Endothelial cell of umbilical vein (primary cell): ENCODE measurements at regions of chr3 and their contacts with region 1.

Region 1: DNA sequence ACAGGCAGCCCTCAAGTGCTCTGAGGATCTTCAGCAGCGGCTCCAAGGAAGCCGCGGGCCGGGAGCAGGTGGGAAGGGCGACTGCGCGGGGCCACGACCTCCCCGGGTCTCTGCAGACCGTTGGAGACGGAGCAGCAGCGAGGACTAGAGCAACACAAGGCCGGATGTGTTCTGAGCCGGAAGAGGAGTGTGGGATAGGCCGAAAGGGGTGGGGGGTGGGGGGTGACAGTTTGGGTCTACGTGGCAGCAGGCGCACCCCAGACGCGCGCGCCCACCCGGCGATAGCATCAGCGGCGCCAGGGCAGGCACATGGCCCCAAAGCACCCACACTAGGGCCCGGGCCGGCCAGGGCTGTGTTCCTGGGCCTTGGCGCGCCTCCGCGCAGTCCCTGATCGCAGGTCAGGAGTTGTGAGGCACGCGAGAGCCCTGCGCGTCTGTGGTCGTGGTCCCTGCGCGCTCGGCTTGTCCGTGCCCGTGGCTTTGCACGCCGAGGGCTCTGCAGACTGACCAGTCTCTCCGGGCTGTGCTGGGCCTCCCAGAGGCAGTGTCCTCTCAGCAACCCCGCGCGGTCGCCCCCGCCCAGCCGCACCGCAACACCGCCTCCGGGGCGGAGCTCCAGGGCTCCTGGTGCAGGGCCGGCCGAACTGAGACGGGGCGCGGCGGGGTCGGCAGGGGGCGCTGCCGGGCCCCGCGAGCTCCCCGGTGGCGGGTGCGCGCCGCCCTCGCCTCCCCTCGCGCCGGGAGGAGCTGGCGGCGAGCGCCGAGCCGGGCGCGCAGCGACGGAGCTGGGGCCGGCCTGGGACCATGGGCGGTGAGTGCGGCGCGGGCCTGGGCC is at the start of gene PXYLP1:
- DNase-seq: peak; percentile 83
- H3K4me3 ChIP-seq: peak within 1 kb of the TSS; percentile 65 to 75 (median 72)
- H3K27ac ChIP-seq: no peak within 1 kb of the TSS
- H3K4me1 ChIP-seq: peaks cover 8% of the 10 kb centered on the region
- H3K27me3 ChIP-seq: peaks cover 11 to 31% of the 10 kb centered on the region in 2 experiments
- CTCF ChIP-seq: peak; percentile 63 to 77
- POLR2A ChIP-seq: peak; percentile 61
- total RNA-seq, gene PXYLP1: 0.88 and 1.7 TPM in 2 replicates

Region 2: DNA sequence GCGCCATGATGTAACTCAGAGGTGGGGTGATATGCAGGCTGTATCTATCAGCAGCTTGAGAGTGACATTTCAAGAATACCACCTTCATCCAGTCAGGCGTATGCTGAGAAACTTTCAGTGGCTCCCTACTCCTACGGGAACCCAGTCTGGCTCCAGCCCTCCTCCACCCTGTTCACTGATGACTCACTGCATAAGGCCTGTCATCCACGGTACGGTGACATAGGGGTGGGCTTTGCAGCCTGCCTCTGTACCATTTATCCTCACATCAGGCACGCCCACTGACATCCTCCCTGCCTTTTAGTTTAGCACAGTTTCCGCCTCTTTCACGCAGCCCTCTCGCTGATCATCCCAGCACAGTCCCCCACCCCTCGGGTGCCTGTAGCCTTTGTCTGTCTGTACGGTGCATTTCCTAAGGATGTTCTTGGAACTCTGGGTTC is 12.0 kb after region 1 on chr3:
- CTCF ChIA-PET with region 1: interaction called, 13 read pairs
- POLR2A ChIA-PET with region 1: no interaction called
- dilution Hi-C with region 1: no loop called
- intact Hi-C with region 1: no loop called
- DNase-seq: no peak
- H3K4me3 ChIP-seq: no peak overlapping the region
- H3K27ac ChIP-seq: no peak overlapping the region
- H3K4me1 ChIP-seq: no peaks in the 10 kb centered on the region
- H3K27me3 ChIP-seq: no peaks in the 10 kb centered on the region
- CTCF ChIP-seq: no peak
- POLR2A ChIP-seq: no peak

Region 3: DNA sequence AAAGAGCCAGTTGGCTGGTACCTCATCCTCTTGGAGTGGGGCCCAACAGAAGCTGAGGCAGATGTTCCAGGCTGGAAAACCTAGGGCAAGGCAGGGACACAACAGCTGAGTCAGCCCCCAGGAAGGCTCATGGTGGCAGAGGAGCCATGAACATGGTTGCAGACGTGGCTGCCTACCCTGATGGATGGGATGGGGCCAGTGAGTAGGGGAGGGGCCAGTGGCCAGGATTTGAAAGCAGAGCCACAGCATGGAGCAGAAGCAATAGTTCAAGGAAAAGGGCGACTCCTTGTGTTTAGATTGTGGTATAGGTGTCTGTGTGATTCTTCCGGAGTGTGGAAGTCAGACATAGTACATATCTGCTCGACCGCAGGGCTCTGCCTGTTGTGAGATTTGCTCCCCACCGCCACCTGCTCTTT is 24.5 kb after region 1 on chr3:
- CTCF ChIA-PET with region 1: interaction called, 15 read pairs
- POLR2A ChIA-PET with region 1: no interaction called
- dilution Hi-C with region 1: no loop called
- intact Hi-C with region 1: loop called (anchors 1 kb)
- DNase-seq: peak; percentile 6
- H3K4me3 ChIP-seq: no peak overlapping the region
- H3K27ac ChIP-seq: no peak overlapping the region
- H3K4me1 ChIP-seq: no peaks in the 10 kb centered on the region
- H3K27me3 ChIP-seq: peaks cover 0 to 2% of the 10 kb centered on the region in 2 experiments
- CTCF ChIP-seq: peak; percentile 4 to 25
- POLR2A ChIP-seq: no peak

Region 4: GRCh38 chr3:141279077-141279967 is 48.0 kb after region 1 on chr3:
- CTCF ChIA-PET with region 1: interaction called, 6 read pairs
- POLR2A ChIA-PET with region 1: no interaction called
- dilution Hi-C with region 1: no loop called
- intact Hi-C with region 1: loop called (anchors 1 kb)
- DNase-seq: no peak
- H3K4me3 ChIP-seq: no peak overlapping the region
- H3K27ac ChIP-seq: no peak overlapping the region
- H3K4me1 ChIP-seq: peaks cover 5% of the 10 kb centered on the region
- H3K27me3 ChIP-seq: no peaks in the 10 kb centered on the region
- CTCF ChIP-seq: peak; percentile 22 to 39
- POLR2A ChIP-seq: no peak

Region 5: DNA sequence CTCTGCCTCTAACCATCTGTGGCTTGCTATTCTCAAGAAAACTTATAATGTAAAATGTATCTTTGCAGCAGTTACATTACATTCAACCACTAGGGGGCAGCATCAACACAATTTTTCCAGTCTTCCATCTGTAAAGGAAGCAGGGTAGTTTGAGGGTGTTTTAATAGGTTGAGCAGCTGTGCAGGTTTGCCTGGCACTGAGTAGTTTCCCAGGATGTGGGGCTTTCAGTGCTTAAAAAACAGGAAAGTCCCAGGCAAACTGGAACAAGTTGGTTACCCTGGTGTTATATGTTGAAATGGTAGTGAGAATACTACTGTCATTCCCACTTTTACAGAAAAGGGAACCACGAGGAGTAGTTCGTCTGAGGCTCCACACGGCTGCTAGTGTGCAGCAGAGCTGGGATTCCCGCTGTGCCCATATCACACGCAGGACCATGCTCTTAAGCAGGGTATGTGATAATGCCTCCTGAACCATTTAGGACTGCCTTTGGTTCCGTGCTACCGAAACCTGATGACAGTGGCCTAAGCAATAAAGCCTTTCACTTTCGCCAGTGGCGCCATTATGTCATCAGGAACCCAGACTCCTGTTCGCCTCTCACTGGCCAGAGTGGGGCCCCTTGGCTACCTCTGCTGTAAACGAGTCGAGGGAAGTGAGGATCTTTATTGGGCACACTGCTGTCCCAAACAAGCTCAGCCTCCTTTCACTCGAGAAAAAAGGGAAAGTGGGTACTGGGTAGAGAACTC is 72.3 kb after region 1 on chr3:
- CTCF ChIA-PET with region 1: interaction called, 23 read pairs
- POLR2A ChIA-PET with region 1: no interaction called
- dilution Hi-C with region 1: no loop called
- intact Hi-C with region 1: no loop called
- DNase-seq: peak; percentile 86
- H3K4me3 ChIP-seq: no peak overlapping the region
- H3K27ac ChIP-seq: no peak overlapping the region
- H3K4me1 ChIP-seq: no peaks in the 10 kb centered on the region
- H3K27me3 ChIP-seq: peaks cover 0 to 6% of the 10 kb centered on the region in 2 experiments
- CTCF ChIP-seq: peak; percentile 53 to 68
- POLR2A ChIP-seq: no peak

Region 6: DNA sequence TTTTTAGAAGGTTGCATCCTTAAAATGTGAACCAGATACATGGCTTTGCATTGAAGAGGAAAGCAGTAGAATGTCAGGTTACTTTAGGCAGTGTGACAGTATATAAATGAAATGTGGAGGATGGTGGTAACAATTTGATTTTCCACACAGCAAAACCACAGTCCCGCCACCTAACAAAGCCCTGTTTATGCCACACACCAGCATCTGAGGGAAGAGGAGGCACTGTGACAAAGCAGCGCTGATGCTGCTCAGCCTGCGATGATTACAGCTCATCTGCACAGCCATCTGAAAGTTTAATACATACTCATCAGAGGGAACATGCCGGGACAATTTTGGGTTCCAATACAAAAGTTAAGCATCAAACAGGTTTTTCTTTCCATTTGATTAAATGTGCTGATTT is 515.6 kb after region 1 on chr3:
- CTCF ChIA-PET with region 1: no interaction called
- POLR2A ChIA-PET with region 1: no interaction called
- dilution Hi-C with region 1: no loop called
- intact Hi-C with region 1: no loop called
- DNase-seq: no peak
- H3K4me3 ChIP-seq: no peak overlapping the region
- H3K27ac ChIP-seq: no peak overlapping the region
- H3K4me1 ChIP-seq: no peaks in the 10 kb centered on the region
- H3K27me3 ChIP-seq: no peaks in the 10 kb centered on the region
- CTCF ChIP-seq: no peak
- POLR2A ChIP-seq: no peak